ENCODE measurements at regions of chr2 and their contacts with region 1.

Region 1: DNA sequence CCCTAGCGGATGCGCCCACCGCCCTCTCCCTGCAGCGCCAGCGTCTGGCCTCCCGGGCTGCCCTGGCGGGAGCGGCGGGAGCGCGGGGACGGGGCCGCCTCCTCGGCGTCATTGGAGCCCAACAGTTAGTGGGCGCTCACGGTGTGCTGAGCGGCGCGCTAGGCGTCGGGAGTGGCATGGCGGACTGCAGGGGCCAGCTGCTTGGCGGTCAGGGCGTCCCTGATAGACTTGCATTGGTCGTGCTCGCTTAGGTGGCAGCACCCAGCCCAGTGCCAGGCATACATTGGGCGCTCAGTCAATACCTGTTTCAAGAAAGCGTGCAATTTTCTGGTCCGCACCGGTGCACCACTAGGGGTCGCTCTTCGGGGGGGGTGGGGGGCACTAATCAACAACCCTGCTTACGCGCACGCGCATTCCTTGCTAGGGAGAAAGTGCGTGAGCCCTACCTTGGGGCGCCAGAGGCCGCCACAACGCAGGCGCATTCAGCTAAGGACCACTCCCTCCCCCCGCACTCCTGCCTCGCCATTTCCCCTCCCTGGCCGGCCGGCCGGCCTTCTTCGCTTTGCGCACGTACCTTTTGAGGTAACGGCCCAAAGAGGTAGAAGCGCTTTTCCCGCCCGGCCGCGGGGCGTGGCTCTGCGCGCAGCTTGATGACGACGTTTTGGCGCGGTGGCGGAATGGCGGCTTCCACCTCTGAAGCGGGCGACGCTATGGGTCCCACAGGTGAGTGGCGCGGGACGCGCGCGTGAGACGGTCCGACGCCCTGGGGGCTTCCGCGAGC is 411 bp upstream of the MZT2A start:
- DNase-seq: peak; percentile 47
- H3K4me3 ChIP-seq: peak overlapping the region; percentile 88
- CTCF ChIP-seq: peak; percentile 75

Region 2: GRCh38 chr2:131413148-131413747 is 79.4 kb before region 1 on chr2:
- CTCF ChIA-PET with region 1: interaction called, 12 read pairs
- POLR2A ChIA-PET with region 1: no interaction called
- DNase-seq: peak; percentile 10
- H3K4me3 ChIP-seq: no peak overlapping the region
- CTCF ChIP-seq: peak; percentile 56

Region 3: GRCh38 chr2:131475831-131476230 is 16.8 kb before region 1 on chr2 and contains the start of gene TUBA3D:
- CTCF ChIA-PET with region 1: interaction called, 17 read pairs
- POLR2A ChIA-PET with region 1: no interaction called
- DNase-seq: no peak
- H3K4me3 ChIP-seq: no peak within 1 kb of the TSS
- CTCF ChIP-seq: no peak

Region 4: GRCh38 chr2:131509615-131510014 is 17.0 kb after region 1 on chr2:
- CTCF ChIA-PET with region 1: interaction called, 18 read pairs
- POLR2A ChIA-PET with region 1: no interaction called
- DNase-seq: no peak
- H3K4me3 ChIP-seq: no peak overlapping the region
- CTCF ChIP-seq: no peak